Heart right ventricle (tissue), 16 donors: ENCODE measurements at regions of chr5 and their contacts with region 1.

Region 1: GRCh38 chr5:33715661-33716060 is 176.1 kb downstream of the ADAMTS12 start:
- DNase-seq: no peak
- ATAC-seq: no peak
- H3K4me3 ChIP-seq: no peak overlapping the region
- H3K27ac ChIP-seq: peak overlapping the region in 1 of 10 donors; percentile 3
- H3K4me1 ChIP-seq: peaks cover 0 to 10% (median 0%) of the 10 kb centered on the region in 9 donors
- H3K27me3 ChIP-seq: no peaks in the 10 kb centered on the region
- CTCF ChIP-seq: no peak

Region 2: GRCh38 chr5:31908396-31908795 is 1807.3 kb before region 1 on chr5:
- intact Hi-C with region 1: loop called in 1 of 10 experiments (anchors 5 kb)
- DNase-seq: no peak
- ATAC-seq: peak in 1 of 8 donors; percentile 22
- H3K4me3 ChIP-seq: no peak overlapping the region
- H3K27ac ChIP-seq: no peak overlapping the region
- H3K4me1 ChIP-seq: peaks cover 0 to 5% (median 0%) of the 10 kb centered on the region in 9 donors
- H3K27me3 ChIP-seq: no peaks in the 10 kb centered on the region
- CTCF ChIP-seq: no peak